HEK293T (cell line): ENCODE measurements at regions of chr3 and their contacts with region 1.

Region 1: GRCh38 chr3:63818281-63819150 is 583 bp upstream of the C3orf49 start:
- DNase-seq: peak; percentile 60

Region 2: GRCh38 chr3:63343674-63344073 is 474.8 kb before region 1 on chr3:
- CTCF ChIA-PET with region 1: interaction called, 16 read pairs
- POLR2A ChIA-PET with region 1: no interaction called
- DNase-seq: peak; percentile 35

Region 3: DNA sequence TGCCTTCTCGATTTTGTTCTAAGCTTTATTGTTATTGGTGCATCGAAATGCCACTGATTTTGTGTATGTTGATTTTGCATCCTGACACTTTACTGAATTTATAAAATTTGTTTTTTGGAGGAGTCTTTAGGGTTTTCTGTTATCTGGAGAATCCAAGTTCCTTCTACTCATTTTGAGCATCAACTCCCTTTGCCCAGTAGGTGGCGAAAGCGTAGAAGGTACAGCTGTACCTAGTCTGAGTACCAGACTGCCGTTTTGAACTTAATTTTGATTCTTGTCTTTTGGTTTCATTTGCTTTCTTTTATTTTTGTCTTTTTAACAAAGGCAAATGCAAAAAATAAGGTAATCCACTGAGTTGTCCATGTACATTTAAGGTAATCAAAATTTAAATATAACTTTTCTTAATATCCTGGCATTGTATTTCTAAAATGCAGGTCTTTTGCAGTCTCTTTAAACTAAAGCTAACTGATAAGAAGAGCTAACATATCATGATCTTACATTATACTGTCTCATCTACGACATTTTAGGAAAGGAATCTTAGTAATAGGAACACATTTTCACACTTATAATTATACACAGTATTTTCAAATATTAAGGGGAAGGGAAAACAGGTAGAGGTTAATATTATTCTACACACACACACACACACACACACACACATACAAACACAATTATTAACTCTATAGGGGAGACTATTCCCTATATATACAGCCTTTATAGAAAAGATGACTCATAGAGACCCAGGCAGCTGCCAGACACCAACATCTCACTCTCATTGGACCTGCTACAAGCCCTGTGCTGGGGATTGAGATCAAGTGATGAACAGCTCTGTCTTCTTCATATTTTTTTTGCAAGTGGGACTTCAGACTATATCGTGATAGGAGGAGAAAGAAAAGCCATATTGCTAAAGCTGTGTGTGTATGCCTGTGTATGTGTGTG is 468.7 kb before region 1 on chr3:
- CTCF ChIA-PET with region 1: interaction called, 17 read pairs
- POLR2A ChIA-PET with region 1: no interaction called
- DNase-seq: peak; percentile 37

Region 4: GRCh38 chr3:64104674-64105111 is 286.2 kb after region 1 on chr3:
- CTCF ChIA-PET with region 1: no interaction called
- POLR2A ChIA-PET with region 1: no interaction called
- DNase-seq: no peak